ENCODE measurements at regions of chr5 and their contacts with region 1.

Region 1: DNA sequence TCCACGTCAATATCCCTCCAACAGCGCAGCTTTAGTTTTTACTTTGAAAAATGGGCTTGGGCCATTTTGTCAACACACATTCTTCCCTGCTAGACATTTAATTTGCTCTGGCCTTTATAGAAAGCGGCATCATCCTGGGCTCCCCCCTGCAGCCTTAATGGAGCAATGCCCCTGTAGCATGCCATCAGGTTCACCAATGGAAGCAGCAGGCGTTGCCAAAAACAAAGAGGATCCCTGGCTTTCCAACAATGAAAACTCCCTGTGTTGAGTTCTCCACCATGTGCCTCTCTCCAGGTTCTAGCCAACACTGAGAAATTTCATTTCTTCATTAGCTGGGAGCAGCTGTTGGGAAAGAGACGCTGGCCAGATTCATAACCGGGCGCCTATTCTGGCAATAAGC is 139.5 kb downstream of the ZNF622 start:
- DNase-seq: no peak
- H3K4me3 ChIP-seq: no peak overlapping the region
- H3K27ac ChIP-seq: no peak overlapping the region
- H3K4me1 ChIP-seq: no peaks in the 10 kb centered on the region
- CTCF ChIP-seq: no peak

Region 2: GRCh38 chr5:15499528-15500324 is 826.4 kb before region 1 on chr5 and contains the start of gene FBXL7:
- CTCF ChIA-PET with region 1: no interaction called
- POLR2A ChIA-PET with region 1: interaction called, 10 read pairs
- intact Hi-C with region 1: no loop called
- DNase-seq: no peak
- H3K4me3 ChIP-seq: no peak within 1 kb of the TSS
- H3K27ac ChIP-seq: no peak within 1 kb of the TSS
- H3K4me1 ChIP-seq: no peaks in the 10 kb centered on the region
- CTCF ChIP-seq: no peak
- total RNA-seq, gene FBXL7: not detected in 2 replicates

Measured in OCI-LY7 (cell line).